ENCODE measurements at regions of chr17 and their contacts with region 1.

Region 1: DNA sequence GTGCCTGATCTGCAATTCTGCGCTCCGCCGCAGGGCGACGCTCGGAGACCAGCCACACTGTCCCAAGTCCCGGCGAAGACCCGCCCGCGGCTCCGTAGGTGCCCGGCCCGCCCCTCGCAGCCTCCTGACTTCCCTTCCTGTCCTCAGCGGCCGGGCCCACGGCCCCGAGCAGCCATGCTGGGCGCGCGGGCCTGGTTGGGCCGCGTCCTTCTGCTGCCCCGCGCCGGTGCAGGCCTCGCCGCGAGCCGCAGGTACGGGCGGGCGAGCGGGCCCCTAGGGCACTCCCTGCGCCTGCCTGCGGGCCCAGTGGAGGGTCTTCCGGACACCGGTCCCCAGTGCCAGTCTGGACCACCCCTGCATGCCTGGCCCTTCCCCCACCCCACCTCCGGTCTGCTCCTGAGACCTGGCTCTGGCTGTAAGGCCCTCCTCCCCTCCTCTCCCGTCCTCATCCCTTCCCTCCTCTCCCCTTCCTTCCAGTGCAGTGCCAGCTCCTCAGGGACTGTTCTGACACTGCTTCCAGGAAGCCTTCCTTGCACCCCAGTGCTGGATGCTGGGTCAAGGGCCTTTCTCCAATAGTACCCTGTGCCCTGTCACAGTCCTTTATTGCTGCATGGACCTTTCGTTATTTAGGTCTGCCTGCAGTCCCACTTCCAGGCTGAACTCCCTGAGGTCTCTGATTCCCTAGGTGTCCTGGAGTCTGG is at the start of gene SPATA20:
- DNase-seq: peak; percentile 78 to 92
- H3K4me3 ChIP-seq: peak within 1 kb of the TSS; percentile 32 to 67 (median 57)
- H3K27ac ChIP-seq: no peak within 1 kb of the TSS; the same call in 1 of the 2 replicates
- H3K4me1 ChIP-seq: peaks cover 6 to 20% (median 13%) of the 10 kb centered on the region in 4 experiments
- H3K27me3 ChIP-seq: no peaks in the 10 kb centered on the region
- CTCF ChIP-seq: peak; percentile 94 to 97 (median 96)
- EP300 ChIP-seq: no peak
- POLR2A ChIP-seq: peak in 1 of 2 experiments; percentile 83; a peak in 2 of 3 replicates
- RAD21 ChIP-seq: peak; percentile 99
- total RNA-seq, gene SPATA20: 16.2 and 16.7 TPM in 2 replicates

Region 2: GRCh38 chr17:50380369-50381259 is 166.6 kb before region 1 on chr17:
- CTCF ChIA-PET with region 1: no interaction called
- POLR2A ChIA-PET with region 1: no interaction called
- DNase-seq: no peak
- H3K4me3 ChIP-seq: no peak overlapping the region
- H3K27ac ChIP-seq: no peak overlapping the region
- H3K4me1 ChIP-seq: no peaks in the 10 kb centered on the region
- H3K27me3 ChIP-seq: no peaks in the 10 kb centered on the region
- CTCF ChIP-seq: peak in 2 of 3 experiments; percentile 13 to 14; a peak in 2 of 4 replicates
- EP300 ChIP-seq: no peak
- POLR2A ChIP-seq: peak in 1 of 2 experiments; percentile 50; a peak in 2 of 3 replicates
- RAD21 ChIP-seq: 0 out of 4 replicates have a peak, but pooled peaks have one; percentile 3 to 9

Region 3: DNA sequence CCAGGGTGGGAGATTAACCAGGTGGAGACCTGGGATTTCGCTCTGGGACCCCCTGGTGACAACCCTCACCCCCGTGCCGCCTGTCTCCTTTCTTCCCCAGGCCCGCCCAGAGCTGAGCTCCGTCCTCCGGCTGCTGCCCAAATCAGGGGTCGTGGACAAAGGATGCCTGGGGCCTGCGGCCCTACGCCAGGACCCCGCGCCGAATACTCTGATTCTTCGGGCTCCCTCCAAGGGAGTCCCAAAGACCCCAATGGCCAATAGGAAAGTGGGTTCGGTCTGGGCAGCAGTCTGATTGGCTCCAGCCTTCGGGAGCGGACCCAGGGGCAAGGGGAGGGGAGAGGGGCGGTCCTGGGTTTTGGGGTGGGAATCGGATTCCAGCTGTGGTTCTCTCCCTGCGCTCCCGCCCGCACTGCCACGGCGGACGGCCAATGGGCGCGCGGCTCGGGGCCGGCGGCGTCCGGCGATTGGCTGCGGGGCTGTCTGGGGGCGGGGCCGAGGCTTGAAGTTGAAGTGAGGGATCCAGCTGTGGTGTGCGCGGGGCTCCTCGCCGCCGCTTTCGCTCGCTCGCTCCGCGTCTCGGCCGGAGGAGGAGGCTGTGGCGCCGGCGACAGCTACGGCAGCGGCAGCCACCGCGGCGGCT is 13.1 kb after region 1 on chr17 and contains the start of gene CACNA1G:
- CTCF ChIA-PET with region 1: interaction called, 66 read pairs
- POLR2A ChIA-PET with region 1: interaction called, 7 read pairs
- DNase-seq: peak; percentile 90 to 99
- H3K4me3 ChIP-seq: peak within 1 kb of the TSS; percentile 35 to 63 (median 51)
- H3K27ac ChIP-seq: no peak within 1 kb of the TSS
- H3K4me1 ChIP-seq: peaks cover 0 to 33% (median 19%) of the 10 kb centered on the region in 4 experiments; a peak in 6 of 7 replicates
- H3K27me3 ChIP-seq: peaks cover 25 to 71% (median 63%) of the 10 kb centered on the region in 4 experiments
- CTCF ChIP-seq: no peak
- EP300 ChIP-seq: no peak
- POLR2A ChIP-seq: peak in 1 of 2 experiments; percentile 48; a peak in 1 of 3 replicates
- RAD21 ChIP-seq: no peak
- total RNA-seq, gene CACNA1G: 4.8 and 4.9 TPM in 2 replicates

Region 4: GRCh38 chr17:50589095-50589705 is 42.0 kb after region 1 on chr17:
- CTCF ChIA-PET with region 1: interaction called, 35 read pairs
- POLR2A ChIA-PET with region 1: no interaction called
- DNase-seq: no peak
- H3K4me3 ChIP-seq: no peak overlapping the region
- H3K27ac ChIP-seq: no peak overlapping the region
- H3K4me1 ChIP-seq: peaks cover 0 to 20% (median 11%) of the 10 kb centered on the region in 4 experiments; a peak in 6 of 7 replicates
- H3K27me3 ChIP-seq: no peaks in the 10 kb centered on the region; a peak in 1 of 7 replicates
- CTCF ChIP-seq: no peak
- EP300 ChIP-seq: no peak
- POLR2A ChIP-seq: no peak
- RAD21 ChIP-seq: no peak

Region 5: GRCh38 chr17:50613007-50613992 is 66.1 kb after region 1 on chr17:
- CTCF ChIA-PET with region 1: interaction called, 404 read pairs
- POLR2A ChIA-PET with region 1: interaction called, 5 read pairs
- DNase-seq: no peak
- H3K4me3 ChIP-seq: no peak overlapping the region
- H3K27ac ChIP-seq: no peak overlapping the region
- H3K4me1 ChIP-seq: peaks cover 0 to 6% (median 3%) of the 10 kb centered on the region in 4 experiments; a peak in 1 of 7 replicates
- H3K27me3 ChIP-seq: no peaks in the 10 kb centered on the region
- CTCF ChIP-seq: peak in 1 of 3 experiments; percentile 24; a peak in 2 of 4 replicates
- EP300 ChIP-seq: no peak
- POLR2A ChIP-seq: no peak
- RAD21 ChIP-seq: peak; percentile 37

Region 6: GRCh38 chr17:50686494-50687199 is 139.5 kb after region 1 on chr17:
- CTCF ChIA-PET with region 1: interaction called, 14 read pairs
- POLR2A ChIA-PET with region 1: interaction called, 4 read pairs
- DNase-seq: no peak
- H3K4me3 ChIP-seq: no peak overlapping the region
- H3K27ac ChIP-seq: no peak overlapping the region
- H3K4me1 ChIP-seq: peaks cover 1 to 28% (median 10%) of the 10 kb centered on the region in 4 experiments; a peak in 6 of 7 replicates
- H3K27me3 ChIP-seq: no peaks in the 10 kb centered on the region
- CTCF ChIP-seq: no peak
- EP300 ChIP-seq: no peak
- POLR2A ChIP-seq: no peak
- RAD21 ChIP-seq: no peak

Region 7: DNA sequence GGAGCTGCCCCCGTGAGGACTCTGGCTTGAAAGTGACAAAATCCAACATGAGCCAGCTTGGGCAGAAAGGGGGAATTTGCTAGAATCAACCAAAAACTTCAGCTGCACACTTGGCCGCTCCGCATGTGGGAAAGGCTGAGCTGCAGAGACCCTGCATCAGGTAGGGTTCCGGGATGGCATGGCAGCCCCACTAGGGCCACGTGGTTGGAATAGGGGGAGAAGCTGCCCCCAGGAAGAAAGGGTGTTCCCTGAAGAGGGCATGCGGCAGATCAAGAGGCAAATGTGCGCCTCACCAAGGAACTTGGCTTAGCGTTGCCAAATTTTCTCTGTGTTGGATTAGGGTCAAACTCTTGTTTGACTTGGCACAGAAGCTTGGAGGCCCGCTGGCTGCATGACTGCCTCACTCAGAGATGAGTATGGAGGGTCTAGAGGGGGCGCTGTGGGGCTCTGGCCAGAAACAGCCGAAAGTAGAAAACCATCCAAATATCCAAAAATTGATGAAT is 259.0 kb after region 1 on chr17:
- CTCF ChIA-PET with region 1: no interaction called
- POLR2A ChIA-PET with region 1: no interaction called
- DNase-seq: peak in 1 of 2 experiments; percentile 68
- H3K4me3 ChIP-seq: no peak overlapping the region
- H3K27ac ChIP-seq: no peak overlapping the region
- H3K4me1 ChIP-seq: no peaks in the 10 kb centered on the region
- H3K27me3 ChIP-seq: no peaks in the 10 kb centered on the region
- CTCF ChIP-seq: peak; percentile 54 to 61 (median 58)
- EP300 ChIP-seq: no peak
- POLR2A ChIP-seq: no peak
- RAD21 ChIP-seq: peak; percentile 37 to 53; a peak in 3 of 4 replicates

Measured in H1 (cell line).